ENCODE measurements at regions of chr20 and their contacts with region 1.

Region 1: GRCh38 chr20:62926239-62927104 is at the start of gene DIDO1:
- DNase-seq: peak; percentile 82
- H3K4me3 Mint-ChIP-seq: peak within 1 kb of the TSS; percentile 76
- H3K27ac Mint-ChIP-seq: peak within 1 kb of the TSS; percentile 95
- H3K4me1 Mint-ChIP-seq: peaks cover 31% of the 10 kb centered on the region
- H3K27me3 Mint-ChIP-seq: no peaks in the 10 kb centered on the region
- CTCF ChIP-seq: peak; percentile 65
- total RNA-seq, gene DIDO1: 36.8 and 40.7 TPM in 2 replicates

Region 2: GRCh38 chr20:62850333-62850974 is 76.0 kb before region 1 on chr20:
- CTCF ChIA-PET with region 1: no interaction called
- POLR2A ChIA-PET with region 1: no interaction called
- intact Hi-C with region 1: no loop called
- DNase-seq: no peak
- H3K4me3 Mint-ChIP-seq: no peak overlapping the region
- H3K27ac Mint-ChIP-seq: no peak overlapping the region
- H3K4me1 Mint-ChIP-seq: no peaks in the 10 kb centered on the region
- H3K27me3 Mint-ChIP-seq: no peaks in the 10 kb centered on the region
- CTCF ChIP-seq: no peak

Region 3: GRCh38 chr20:62875419-62876361 is 50.8 kb before region 1 on chr20:
- CTCF ChIA-PET with region 1: interaction called, 3 read pairs
- POLR2A ChIA-PET with region 1: interaction called, 10 read pairs
- intact Hi-C with region 1: no loop called
- DNase-seq: peak; percentile 82
- H3K4me3 Mint-ChIP-seq: peak overlapping the region; percentile 40
- H3K27ac Mint-ChIP-seq: peak overlapping the region; percentile 16
- H3K4me1 Mint-ChIP-seq: peaks cover 6% of the 10 kb centered on the region
- H3K27me3 Mint-ChIP-seq: no peaks in the 10 kb centered on the region
- CTCF ChIP-seq: peak; percentile 27

Region 4: DNA sequence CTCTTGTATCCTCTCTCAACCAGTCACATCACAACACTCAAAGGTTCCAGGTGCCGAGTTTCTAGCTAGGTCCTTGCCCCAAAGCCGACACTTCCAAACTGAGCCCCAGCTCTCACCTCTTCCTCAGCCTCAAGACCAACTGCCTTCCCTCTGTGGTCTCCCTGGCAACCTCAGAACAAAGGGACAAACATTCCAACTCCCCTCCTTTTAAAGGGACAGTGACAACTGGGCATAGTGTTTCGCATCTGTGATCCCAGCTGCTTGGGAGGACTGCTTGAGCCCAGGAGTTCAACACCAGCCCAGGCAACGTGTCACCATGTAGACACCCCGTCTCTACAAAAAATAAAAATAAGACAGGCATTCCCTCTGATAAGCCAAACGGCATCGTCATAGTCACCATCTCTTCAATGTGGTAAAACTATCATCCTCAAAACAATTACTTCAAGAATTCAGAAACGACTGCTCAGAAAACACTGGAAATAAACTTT is 11.5 kb before region 1 on chr20:
- CTCF ChIA-PET with region 1: interaction called, 14 read pairs
- POLR2A ChIA-PET with region 1: interaction called, 22 read pairs
- intact Hi-C with region 1: no loop called
- DNase-seq: no peak
- H3K4me3 Mint-ChIP-seq: no peak overlapping the region
- H3K27ac Mint-ChIP-seq: peak overlapping the region; percentile 84
- H3K4me1 Mint-ChIP-seq: peaks cover 31% of the 10 kb centered on the region
- H3K27me3 Mint-ChIP-seq: no peaks in the 10 kb centered on the region
- CTCF ChIP-seq: no peak

Region 5: GRCh38 chr20:62972270-62973032 is 46.0 kb after region 1 on chr20:
- CTCF ChIA-PET with region 1: no interaction called
- POLR2A ChIA-PET with region 1: no interaction called
- intact Hi-C with region 1: no loop called
- DNase-seq: peak; percentile 74
- H3K4me3 Mint-ChIP-seq: peak overlapping the region; percentile 41
- H3K27ac Mint-ChIP-seq: no peak overlapping the region
- H3K4me1 Mint-ChIP-seq: peaks cover 6% of the 10 kb centered on the region
- H3K27me3 Mint-ChIP-seq: peaks cover 7% of the 10 kb centered on the region
- CTCF ChIP-seq: peak; percentile 93